Heart right ventricle (tissue), 16 donors: ENCODE measurements at regions of chr19 and their contacts with region 1.

Region 1: GRCh38 chr19:56314562-56315077 is at the start of gene ZSCAN5A:
- DNase-seq: peak; percentile 97 to 99
- ATAC-seq: peak; percentile 91 to 97 (median 95)
- H3K4me3 ChIP-seq: peak within 1 kb of the TSS; percentile 40 to 83 (median 72)
- H3K27ac ChIP-seq: peak within 1 kb of the TSS; percentile 71 to 99 (median 96)
- H3K4me1 ChIP-seq: peaks cover 0 to 49% (median 18%) of the 10 kb centered on the region in 9 donors
- H3K27me3 ChIP-seq: no peaks in the 10 kb centered on the region
- CTCF ChIP-seq: no peak
- total RNA-seq, gene ZSCAN5A: 17.7 to 33.4 (median 21.4) TPM

Region 2: GRCh38 chr19:56367829-56368711 is 53.5 kb after region 1 on chr19:
- intact Hi-C with region 1: loop called in 1 of 10 experiments (anchors 2 kb)
- DNase-seq: peak; percentile 94 to 95
- ATAC-seq: peak; percentile 97 to 100 (median 98)
- H3K4me3 ChIP-seq: peak overlapping the region; percentile 48 to 87 (median 74)
- H3K27ac ChIP-seq: peak overlapping the region; percentile 76 to 95 (median 90)
- H3K4me1 ChIP-seq: peaks cover 2 to 26% (median 18%) of the 10 kb centered on the region in 9 donors
- H3K27me3 ChIP-seq: no peaks in the 10 kb centered on the region
- CTCF ChIP-seq: no peak

Region 3: GRCh38 chr19:56423276-56423984 is 108.8 kb after region 1 on chr19:
- intact Hi-C with region 1: no loop called
- DNase-seq: no peak
- ATAC-seq: no peak
- H3K4me3 ChIP-seq: no peak overlapping the region
- H3K27ac ChIP-seq: no peak overlapping the region
- H3K4me1 ChIP-seq: no peaks in the 10 kb centered on the region
- H3K27me3 ChIP-seq: no peaks in the 10 kb centered on the region
- CTCF ChIP-seq: no peak